Caco-2 (cell line): ENCODE measurements at regions of chr6 and their contacts with region 1.

Region 1: GRCh38 chr6:13624871-13625288 is 9.7 kb downstream of the NOL7 start:
- DNase-seq: peak in 1 of 2 experiments; percentile 54
- H3K4me3 ChIP-seq: no peak overlapping the region
- H3K4me3 Mint-ChIP-seq: no peak overlapping the region
- H3K27ac Mint-ChIP-seq: no peak overlapping the region
- H3K4me1 ChIP-seq: peaks cover 5% of the 10 kb centered on the region
- H3K4me1 Mint-ChIP-seq: peaks cover 7% of the 10 kb centered on the region
- H3K27me3 ChIP-seq: no peaks in the 10 kb centered on the region
- H3K27me3 Mint-ChIP-seq: no peaks in the 10 kb centered on the region
- CTCF ChIP-seq: peak; percentile 56 to 57

Region 2: DNA sequence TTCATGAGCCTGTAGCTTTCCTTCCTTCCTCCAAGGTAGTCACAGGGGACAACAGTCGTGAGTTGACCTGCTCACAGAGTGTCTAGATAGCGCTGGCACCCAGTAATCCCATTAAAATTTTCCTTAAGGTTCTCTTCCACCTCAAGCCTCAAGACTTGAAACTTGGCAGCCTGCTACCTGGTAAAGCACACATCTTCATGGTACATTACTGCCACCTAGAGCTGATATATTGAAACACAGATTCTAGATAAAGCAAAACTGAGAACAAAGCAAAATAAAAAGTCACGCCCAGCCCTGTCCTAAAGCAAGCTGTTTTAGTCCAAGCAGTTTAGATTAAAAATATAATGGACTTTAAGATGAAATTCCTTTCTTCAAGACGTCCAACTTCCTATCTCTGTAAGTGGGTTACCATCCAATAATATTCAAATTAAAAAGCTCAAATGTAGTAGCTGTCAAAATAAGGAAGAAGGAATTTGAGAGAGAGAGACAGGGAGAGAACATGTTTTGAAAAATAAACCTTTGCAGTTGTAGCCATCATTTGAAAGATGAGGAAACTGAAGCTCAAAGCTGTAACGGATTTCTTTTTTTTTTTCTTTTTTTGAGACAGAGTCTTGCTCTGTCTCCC is 442.0 kb after region 1 on chr6:
- CTCF ChIA-PET with region 1: interaction called, 6 read pairs
- POLR2A ChIA-PET with region 1: no interaction called
- intact Hi-C with region 1: loop called (anchors 10 kb)
- DNase-seq: peak in 1 of 2 experiments; percentile 51
- H3K4me3 ChIP-seq: no peak overlapping the region
- H3K4me3 Mint-ChIP-seq: no peak overlapping the region
- H3K27ac Mint-ChIP-seq: no peak overlapping the region
- H3K4me1 ChIP-seq: no peaks in the 10 kb centered on the region
- H3K4me1 Mint-ChIP-seq: peaks cover 7% of the 10 kb centered on the region
- H3K27me3 ChIP-seq: no peaks in the 10 kb centered on the region
- H3K27me3 Mint-ChIP-seq: peaks cover 3% of the 10 kb centered on the region
- CTCF ChIP-seq: peak; percentile 57 to 60